Left ventricle myocardium superior (tissue), 1 donor: ENCODE measurements at regions of chr6 and their contacts with region 1.

Region 1: GRCh38 chr6:75368151-75368779 is 83.7 kb upstream of the TMEM30A start:
- DNase-seq: peak; percentile 31
- ATAC-seq: peak; percentile 81

Region 2: GRCh38 chr6:75493400-75494064 is 125.3 kb after region 1 on chr6 and contains the start of gene FILIP1:
- intact Hi-C with region 1: loop called (anchors 10 kb)
- DNase-seq: peak; percentile 62
- ATAC-seq: peak; percentile 89
- total RNA-seq, gene FILIP1: 156 TPM